Natural killer cell (primary cell): ENCODE measurements at regions of chr2 and their contacts with region 1.

Region 1: DNA sequence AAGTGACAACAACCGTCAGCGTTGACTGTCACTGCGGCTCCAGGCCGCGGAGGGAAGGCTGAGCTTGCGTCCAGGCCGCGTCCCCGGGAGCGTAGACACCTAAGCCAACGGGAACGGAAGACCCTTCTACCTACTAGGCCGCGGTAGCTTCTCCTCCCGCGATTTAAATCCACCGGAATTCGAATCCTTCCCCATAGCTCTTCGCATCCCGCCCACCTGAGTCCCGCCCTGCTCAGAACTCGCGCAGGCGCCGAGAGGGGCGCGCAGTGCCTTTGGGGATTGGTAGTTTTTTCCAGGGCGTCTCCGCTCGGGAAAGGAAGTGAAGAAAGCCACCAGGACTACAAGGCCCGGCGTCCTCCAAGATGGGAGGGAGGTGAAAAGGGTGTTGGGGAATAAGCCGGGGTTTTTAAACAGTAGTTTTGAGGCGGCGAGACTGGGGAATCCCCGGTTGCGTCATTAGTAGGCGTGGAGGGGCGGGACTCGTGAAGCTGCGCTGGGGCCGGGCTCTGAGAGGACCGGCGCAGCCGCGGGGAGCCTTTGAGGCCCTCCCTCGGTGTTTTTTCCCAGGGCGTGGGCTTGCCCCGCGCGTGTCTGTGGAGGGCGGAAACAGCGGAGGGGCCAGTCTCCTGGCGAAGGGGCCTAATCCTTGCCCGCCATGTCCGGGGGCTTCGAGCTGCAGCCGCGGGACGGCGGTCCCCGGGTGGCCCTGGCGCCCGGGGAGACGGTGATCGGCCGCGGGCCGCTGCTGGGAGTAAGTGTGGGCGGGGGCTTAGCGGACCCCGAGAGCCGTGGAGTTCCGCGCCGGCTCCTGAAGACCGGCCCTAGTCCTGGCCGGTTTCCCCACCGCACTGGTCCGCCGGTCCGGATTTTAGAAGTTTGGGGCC is at the starts of genes APLF and FBXO48:
- DNase-seq: peak; percentile 98 to 99
- ATAC-seq: peak; percentile 87 to 96 (median 89)
- H3K4me3 ChIP-seq: peak within 1 kb of the TSS; percentile 79
- H3K4me3 Mint-ChIP-seq: peak within 1 kb of the TSS; percentile 96
- H3K27ac ChIP-seq: peak within 1 kb of the TSS; percentile 74
- H3K27ac Mint-ChIP-seq: peak within 1 kb of the TSS; percentile 96 to 97
- H3K4me1 ChIP-seq: peaks cover 16% of the 10 kb centered on the region
- H3K4me1 Mint-ChIP-seq: peaks cover 12 to 25% of the 10 kb centered on the region in 2 donors
- H3K27me3 ChIP-seq: no peaks in the 10 kb centered on the region
- H3K27me3 Mint-ChIP-seq: peaks cover 4 to 17% of the 10 kb centered on the region in 2 donors
- CTCF ChIP-seq: no peak
- total RNA-seq, gene APLF: 2.2 to 4.3 (median 3.8) TPM
- total RNA-seq, gene FBXO48: 0.96 to 1.3 (median 1.1) TPM

Region 2: DNA sequence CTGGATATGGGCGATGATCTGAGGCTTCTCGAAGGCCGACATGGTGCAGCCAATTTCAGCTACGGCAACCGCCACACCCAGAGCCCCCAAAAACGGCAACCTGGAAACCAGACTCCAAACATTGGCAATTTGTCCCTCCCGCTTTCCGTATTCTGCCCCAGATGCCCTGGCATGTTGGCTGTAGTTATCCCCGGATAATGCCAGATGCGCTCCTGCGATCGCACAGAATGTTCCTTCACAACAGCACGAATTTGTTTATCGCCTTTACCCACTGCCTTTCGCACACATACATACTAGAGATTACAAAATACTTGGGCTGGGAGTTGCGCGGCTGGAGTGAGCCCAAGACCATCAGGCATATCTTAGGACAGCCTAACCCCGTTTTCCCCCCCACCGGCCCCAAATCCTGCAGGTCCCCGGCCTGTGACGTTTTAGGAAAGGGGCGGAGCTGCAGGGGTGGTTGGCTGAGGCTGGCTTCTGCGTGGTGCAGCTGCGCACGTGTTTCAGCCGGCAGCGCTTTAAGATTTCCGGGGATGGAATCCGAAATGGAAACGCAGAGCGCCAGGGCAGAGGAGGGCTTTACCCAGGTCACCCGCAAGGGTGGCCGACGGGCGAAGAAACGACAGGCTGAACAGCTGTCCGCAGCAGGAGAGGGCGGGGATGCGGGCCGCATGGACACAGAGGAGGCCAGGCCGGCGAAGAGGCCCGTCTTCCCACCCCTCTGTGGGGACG is 309.8 kb before region 1 on chr2 and contains the start of gene PNO1:
- intact Hi-C with region 1: loop called (anchors 1 kb)
- DNase-seq: peak; percentile 98 to 99
- ATAC-seq: peak; percentile 93 to 99 (median 95)
- H3K4me3 ChIP-seq: peak within 1 kb of the TSS; percentile 96
- H3K4me3 Mint-ChIP-seq: peak within 1 kb of the TSS; percentile 100
- H3K27ac ChIP-seq: peak within 1 kb of the TSS; percentile 97
- H3K27ac Mint-ChIP-seq: peak within 1 kb of the TSS; percentile 96 to 100
- H3K4me1 ChIP-seq: peaks cover 8% of the 10 kb centered on the region
- H3K4me1 Mint-ChIP-seq: peaks cover 33 to 34% of the 10 kb centered on the region in 2 donors
- H3K27me3 ChIP-seq: no peaks in the 10 kb centered on the region
- H3K27me3 Mint-ChIP-seq: no peaks in the 10 kb centered on the region
- CTCF ChIP-seq: no peak
- total RNA-seq, gene PNO1: 19.4 to 25.1 (median 25.0) TPM

Region 3: GRCh38 chr2:68516051-68516955 is 49.0 kb after region 1 on chr2:
- intact Hi-C with region 1: loop called (anchors 5 kb)
- DNase-seq: no peak
- ATAC-seq: peak in 2 of 3 donors; percentile 42 to 59
- H3K4me3 ChIP-seq: no peak overlapping the region
- H3K4me3 Mint-ChIP-seq: no peak overlapping the region
- H3K27ac ChIP-seq: no peak overlapping the region
- H3K27ac Mint-ChIP-seq: peak overlapping the region in 1 of 2 donors; percentile 64
- H3K4me1 ChIP-seq: no peaks in the 10 kb centered on the region
- H3K4me1 Mint-ChIP-seq: no peaks in the 10 kb centered on the region
- H3K27me3 ChIP-seq: no peaks in the 10 kb centered on the region
- H3K27me3 Mint-ChIP-seq: no peaks in the 10 kb centered on the region
- CTCF ChIP-seq: no peak

Region 4: DNA sequence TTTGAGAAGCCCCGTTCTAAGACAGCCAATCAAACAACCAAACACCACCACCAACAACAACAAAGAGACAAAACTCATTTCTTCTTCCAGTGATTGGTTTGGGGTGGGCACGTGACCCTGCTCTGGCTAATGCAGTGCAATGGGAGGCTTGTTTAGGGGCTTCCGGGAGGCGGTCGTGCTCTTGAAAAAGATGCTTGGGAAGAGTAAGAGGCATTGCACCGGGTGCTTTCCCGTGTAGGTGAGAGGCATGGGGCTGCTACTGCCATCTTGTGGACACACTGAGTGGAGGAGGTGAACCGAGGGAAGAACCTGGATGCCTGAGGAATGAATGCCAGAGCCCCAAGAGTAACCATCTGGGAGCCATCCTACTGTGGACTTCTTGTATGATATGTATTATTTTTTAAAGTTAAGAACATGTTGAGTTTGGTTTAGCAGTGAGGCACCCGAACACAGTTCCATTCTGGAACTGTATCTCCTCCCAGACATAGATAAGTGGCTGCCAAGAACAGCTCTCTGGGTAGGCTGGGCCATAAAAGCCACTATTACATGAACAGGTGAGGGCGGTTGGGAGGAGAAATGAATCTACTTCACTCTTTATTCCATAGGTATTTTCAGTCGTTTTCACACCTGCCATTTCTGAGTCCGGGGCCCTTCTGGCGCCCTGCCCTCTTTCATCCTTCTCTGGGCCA is 248.2 kb after region 1 on chr2:
- intact Hi-C with region 1: loop called (anchors 2 kb)
- DNase-seq: peak; percentile 34 to 79
- ATAC-seq: peak; percentile 51 to 76 (median 72)
- H3K4me3 ChIP-seq: no peak overlapping the region
- H3K4me3 Mint-ChIP-seq: no peak overlapping the region
- H3K27ac ChIP-seq: peak overlapping the region; percentile 34
- H3K27ac Mint-ChIP-seq: peak overlapping the region in 1 of 2 donors; percentile 13
- H3K4me1 ChIP-seq: peaks cover 29% of the 10 kb centered on the region
- H3K4me1 Mint-ChIP-seq: peaks cover 41 to 48% of the 10 kb centered on the region in 2 donors
- H3K27me3 ChIP-seq: peaks cover 13% of the 10 kb centered on the region
- H3K27me3 Mint-ChIP-seq: peaks cover 68 to 100% of the 10 kb centered on the region in 2 donors
- CTCF ChIP-seq: peak; percentile 65

Region 5: GRCh38 chr2:68832233-68832869 is 365.0 kb after region 1 on chr2:
- intact Hi-C with region 1: loop called (anchors 2 kb)
- DNase-seq: peak; percentile 53 to 54
- ATAC-seq: peak; percentile 82 to 84 (median 83)
- H3K4me3 ChIP-seq: no peak overlapping the region
- H3K4me3 Mint-ChIP-seq: peak overlapping the region; percentile 61
- H3K27ac ChIP-seq: peak overlapping the region; percentile 35
- H3K27ac Mint-ChIP-seq: peak overlapping the region; percentile 92 to 97
- H3K4me1 ChIP-seq: peaks cover 38% of the 10 kb centered on the region
- H3K4me1 Mint-ChIP-seq: peaks cover 56 to 59% of the 10 kb centered on the region in 2 donors
- H3K27me3 ChIP-seq: no peaks in the 10 kb centered on the region
- H3K27me3 Mint-ChIP-seq: no peaks in the 10 kb centered on the region
- CTCF ChIP-seq: no peak

Region 6: GRCh38 chr2:68925295-68925896 is 458.1 kb after region 1 on chr2:
- intact Hi-C with region 1: loop called (anchors 1 kb)
- DNase-seq: peak in 1 of 2 donors; percentile 85
- ATAC-seq: peak in 2 of 3 donors; percentile 82 to 93
- H3K4me3 ChIP-seq: no peak overlapping the region
- H3K4me3 Mint-ChIP-seq: no peak overlapping the region
- H3K27ac ChIP-seq: no peak overlapping the region
- H3K27ac Mint-ChIP-seq: no peak overlapping the region
- H3K4me1 ChIP-seq: no peaks in the 10 kb centered on the region
- H3K4me1 Mint-ChIP-seq: no peaks in the 10 kb centered on the region
- H3K27me3 ChIP-seq: peaks cover 4% of the 10 kb centered on the region
- H3K27me3 Mint-ChIP-seq: peaks cover 15 to 21% of the 10 kb centered on the region in 2 donors
- CTCF ChIP-seq: peak; percentile 94